Body of pancreas (tissue), 4 donors: ENCODE measurements at regions of chr3 and their contacts with region 1.

Region 1: GRCh38 chr3:31132132-31132769 is 237.8 kb upstream of the GADL1 start:
- DNase-seq: no peak
- ATAC-seq: peak; percentile 62
- H3K4me3 ChIP-seq: no peak overlapping the region
- H3K27ac ChIP-seq: no peak overlapping the region
- H3K4me1 ChIP-seq: no peaks in the 10 kb centered on the region
- H3K27me3 ChIP-seq: no peaks in the 10 kb centered on the region
- CTCF ChIP-seq: peak; percentile 60 to 83 (median 77)
- POLR2A ChIP-seq: no peak

Region 2: DNA sequence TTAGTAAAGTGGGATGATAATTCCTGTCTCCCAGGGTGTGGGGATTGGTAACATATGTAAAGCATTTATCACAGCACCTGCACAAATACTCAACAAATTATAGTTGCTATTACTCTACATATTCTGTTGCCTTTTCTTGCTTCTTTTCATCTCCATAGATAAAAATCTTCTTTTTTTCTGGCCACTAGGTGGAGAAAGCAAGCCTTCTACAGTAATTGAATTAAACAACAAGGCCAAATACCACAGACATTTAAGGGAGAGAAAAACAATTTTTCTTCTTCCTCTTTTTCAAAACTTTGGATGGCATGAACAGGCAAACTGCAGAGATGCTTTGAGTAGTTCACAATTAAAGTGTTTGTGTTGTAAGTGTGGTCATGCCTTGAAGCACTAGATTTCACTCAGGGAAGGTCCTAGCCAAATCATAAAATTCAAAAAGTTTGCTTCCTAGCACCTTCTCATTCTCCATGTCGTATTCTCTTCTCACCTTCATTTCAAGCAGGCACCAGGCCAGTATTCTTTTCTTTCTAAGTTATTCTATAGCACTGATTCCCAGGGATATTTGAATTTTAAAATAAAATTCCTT is 1019.3 kb before region 1 on chr3:
- intact Hi-C with region 1: loop called (anchors 10 kb)
- DNase-seq: no peak
- ATAC-seq: peak; percentile 24
- H3K4me3 ChIP-seq: no peak overlapping the region
- H3K27ac ChIP-seq: no peak overlapping the region
- H3K4me1 ChIP-seq: peaks cover 11% of the 10 kb centered on the region
- H3K27me3 ChIP-seq: no peaks in the 10 kb centered on the region
- CTCF ChIP-seq: peak in 6 of 7 experiments; percentile 36 to 69 (median 58)
- POLR2A ChIP-seq: no peak

Region 3: GRCh38 chr3:30770387-30770786 is 361.9 kb before region 1 on chr3:
- intact Hi-C with region 1: loop called (anchors 5 kb)
- DNase-seq: peak; percentile 9 to 47 (median 24)
- ATAC-seq: peak; percentile 75
- H3K4me3 ChIP-seq: no peak overlapping the region
- H3K27ac ChIP-seq: no peak overlapping the region
- H3K4me1 ChIP-seq: peaks cover 6% of the 10 kb centered on the region
- H3K27me3 ChIP-seq: no peaks in the 10 kb centered on the region
- CTCF ChIP-seq: no peak
- POLR2A ChIP-seq: no peak